Motor neuron (in vitro differentiated cells): ENCODE measurements at regions of chr15 and their contacts with region 1.

Region 1: GRCh38 chr15:53665917-53666316 is 93.5 kb downstream of the WDR72 start:
- ATAC-seq: peak in 5 of 8 experiments; percentile 44 to 72 (median 53)
- H3K4me3 ChIP-seq: no peak overlapping the region
- H3K27ac ChIP-seq: no peak overlapping the region
- H3K4me1 ChIP-seq: peaks cover 0 to 7% of the 10 kb centered on the region in 2 donors

Region 2: DNA sequence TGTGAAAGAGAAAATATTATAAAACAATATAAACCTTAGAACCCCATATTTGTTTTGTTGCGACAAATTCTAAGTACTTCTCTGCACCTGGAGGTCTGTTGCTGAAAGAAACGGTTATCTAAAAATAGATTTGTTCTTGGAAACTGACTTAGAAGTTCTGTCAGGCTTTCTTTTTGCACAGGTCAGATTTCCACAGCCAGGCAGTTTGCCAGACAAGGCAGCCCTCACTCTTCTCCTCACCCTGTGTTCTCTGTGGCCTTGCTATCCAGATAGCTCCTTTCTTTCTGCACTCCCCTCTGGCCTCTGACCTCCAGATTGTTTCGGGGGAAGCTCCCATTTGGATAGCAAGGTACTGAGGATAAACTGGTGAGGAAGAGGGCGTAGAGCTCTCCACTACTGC is 462.5 kb before region 1 on chr15:
- in situ Hi-C with region 1: loop called in 1 of 9 experiments (anchors 25 kb)
- ATAC-seq: no peak
- H3K4me3 ChIP-seq: no peak overlapping the region
- H3K27ac ChIP-seq: no peak overlapping the region
- H3K4me1 ChIP-seq: peaks cover 5 to 18% of the 10 kb centered on the region in 2 donors

Region 3: GRCh38 chr15:53346583-53346982 is 319.3 kb before region 1 on chr15:
- in situ Hi-C with region 1: no loop called
- ATAC-seq: no peak
- H3K4me3 ChIP-seq: no peak overlapping the region
- H3K27ac ChIP-seq: no peak overlapping the region
- H3K4me1 ChIP-seq: peaks cover 4 to 6% of the 10 kb centered on the region in 2 donors